ENCODE measurements at regions of chr19 and their contacts with region 1.

Region 1: DNA sequence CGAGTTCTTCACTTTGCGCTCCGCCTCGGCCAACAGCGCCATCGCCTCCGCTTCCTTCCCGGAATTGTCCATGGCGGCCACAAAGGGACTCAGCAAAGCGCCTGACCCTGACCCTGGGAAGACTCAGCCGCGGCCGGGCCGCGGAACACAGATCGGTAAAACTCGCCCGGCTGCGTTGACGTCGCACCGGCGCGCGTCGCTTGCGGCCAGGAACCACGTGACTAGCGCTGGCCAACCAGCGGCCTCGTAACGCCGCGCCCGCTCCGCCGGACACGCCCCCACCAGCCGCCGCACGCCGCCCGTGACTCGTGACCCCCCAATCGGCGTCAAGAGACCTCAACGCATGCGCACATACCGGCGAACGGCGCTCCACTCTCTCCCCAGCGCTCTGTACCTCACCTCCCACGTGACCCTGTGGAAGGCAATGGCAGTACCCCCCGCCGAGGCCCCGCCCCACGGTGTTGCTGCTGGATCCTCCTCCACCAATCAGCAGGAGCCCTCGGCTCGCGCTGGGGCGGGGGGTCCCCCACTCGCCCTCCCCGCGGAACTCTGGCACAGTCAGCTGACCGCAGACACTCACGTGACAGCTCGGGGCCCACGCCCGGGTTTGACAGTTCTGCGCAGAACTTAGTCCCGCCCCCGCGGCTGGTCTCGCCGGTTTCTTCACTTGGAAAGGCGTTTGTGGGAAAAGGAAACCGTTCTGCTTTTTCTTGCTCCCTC is at the start of gene NAPA:
- DNase-seq: peak; percentile 100
- ATAC-seq: peak; percentile 84 to 91
- H3K4me3 ChIP-seq: peak within 1 kb of the TSS; percentile 83 to 98 (median 95)
- H3K27ac ChIP-seq: peak within 1 kb of the TSS; percentile 96 to 100 (median 99)
- H3K4me1 ChIP-seq: peaks cover 43 to 48% of the 10 kb centered on the region in 2 donors
- H3K27me3 ChIP-seq: no peaks in the 10 kb centered on the region
- CTCF ChIP-seq: no peak
- POLR2A ChIP-seq: peak; percentile 99 to 100
- total RNA-seq, gene NAPA: 127 to 272 (median 212) TPM

Region 2: GRCh38 chr19:47273313-47273977 is 241.6 kb before region 1 on chr19:
- in situ Hi-C with region 1: no loop called
- intact Hi-C with region 1: loop called (anchors 10 kb)
- DNase-seq: peak; percentile 77 to 81
- ATAC-seq: peak; percentile 45 to 55
- H3K4me3 ChIP-seq: peak overlapping the region; percentile 60 to 74 (median 70)
- H3K27ac ChIP-seq: peak overlapping the region; percentile 88 to 95 (median 92)
- H3K4me1 ChIP-seq: peaks cover 15 to 35% of the 10 kb centered on the region in 2 donors
- H3K27me3 ChIP-seq: no peaks in the 10 kb centered on the region
- CTCF ChIP-seq: no peak
- POLR2A ChIP-seq: peak; percentile 55 to 70

Region 3: DNA sequence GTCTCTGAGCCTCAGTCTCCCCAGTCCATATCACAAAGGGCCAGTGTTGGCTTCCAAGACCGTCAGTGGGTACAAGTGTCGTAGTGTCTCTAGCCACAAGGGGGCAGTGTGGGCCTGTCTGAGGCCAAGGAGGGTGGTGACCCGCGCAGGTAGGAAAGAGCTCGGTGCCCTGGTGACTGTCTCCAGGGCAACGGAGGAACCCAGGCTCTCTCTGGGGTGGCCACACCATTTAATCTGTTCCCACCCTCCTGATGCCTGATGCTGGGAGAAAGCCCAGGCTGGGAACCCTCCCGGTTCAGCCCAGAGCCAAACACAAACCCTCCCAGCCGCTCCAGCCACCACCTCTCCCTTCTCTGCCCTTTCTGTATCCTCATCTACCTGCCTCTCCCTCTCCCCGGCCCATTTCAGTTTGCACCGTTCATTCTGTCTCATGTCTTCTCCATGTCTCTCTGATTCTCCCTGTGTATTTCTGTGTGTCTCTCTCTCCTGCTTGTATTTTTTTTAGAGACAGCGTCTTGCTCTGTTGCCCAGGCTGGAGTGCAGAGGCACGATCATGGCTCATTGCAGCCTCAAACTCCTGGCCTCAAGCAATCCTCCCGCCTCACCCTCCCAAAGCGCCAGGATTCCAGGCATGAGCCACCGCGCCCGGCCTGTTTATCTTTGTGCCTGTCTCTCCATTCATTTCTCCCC is 78.2 kb before region 1 on chr19:
- in situ Hi-C with region 1: loop called (anchors 5 kb)
- intact Hi-C with region 1: loop called (anchors 1 kb)
- DNase-seq: peak; percentile 51 to 74
- ATAC-seq: peak; percentile 92 to 96
- H3K4me3 ChIP-seq: no peak overlapping the region
- H3K27ac ChIP-seq: no peak overlapping the region
- H3K4me1 ChIP-seq: no peaks in the 10 kb centered on the region
- H3K27me3 ChIP-seq: peaks cover 15 to 34% (median 26%) of the 10 kb centered on the region in 3 donors
- CTCF ChIP-seq: peak; percentile 85 to 96 (median 93)
- POLR2A ChIP-seq: no peak

Region 4: GRCh38 chr19:47600246-47601179 is 85.5 kb after region 1 on chr19:
- in situ Hi-C with region 1: loop called in 1 of 4 experiments (anchors 10 kb)
- intact Hi-C with region 1: loop called (anchors 1 kb)
- DNase-seq: peak; percentile 99 to 100
- ATAC-seq: peak; percentile 96 to 97
- H3K4me3 ChIP-seq: peak overlapping the region; percentile 62 to 68 (median 63)
- H3K27ac ChIP-seq: peak overlapping the region; percentile 89 to 94 (median 92)
- H3K4me1 ChIP-seq: peaks cover 22 to 24% of the 10 kb centered on the region in 2 donors
- H3K27me3 ChIP-seq: no peaks in the 10 kb centered on the region
- CTCF ChIP-seq: peak in 2 of 5 experiments; percentile 10 to 34
- POLR2A ChIP-seq: peak; percentile 90 to 97

Region 5: DNA sequence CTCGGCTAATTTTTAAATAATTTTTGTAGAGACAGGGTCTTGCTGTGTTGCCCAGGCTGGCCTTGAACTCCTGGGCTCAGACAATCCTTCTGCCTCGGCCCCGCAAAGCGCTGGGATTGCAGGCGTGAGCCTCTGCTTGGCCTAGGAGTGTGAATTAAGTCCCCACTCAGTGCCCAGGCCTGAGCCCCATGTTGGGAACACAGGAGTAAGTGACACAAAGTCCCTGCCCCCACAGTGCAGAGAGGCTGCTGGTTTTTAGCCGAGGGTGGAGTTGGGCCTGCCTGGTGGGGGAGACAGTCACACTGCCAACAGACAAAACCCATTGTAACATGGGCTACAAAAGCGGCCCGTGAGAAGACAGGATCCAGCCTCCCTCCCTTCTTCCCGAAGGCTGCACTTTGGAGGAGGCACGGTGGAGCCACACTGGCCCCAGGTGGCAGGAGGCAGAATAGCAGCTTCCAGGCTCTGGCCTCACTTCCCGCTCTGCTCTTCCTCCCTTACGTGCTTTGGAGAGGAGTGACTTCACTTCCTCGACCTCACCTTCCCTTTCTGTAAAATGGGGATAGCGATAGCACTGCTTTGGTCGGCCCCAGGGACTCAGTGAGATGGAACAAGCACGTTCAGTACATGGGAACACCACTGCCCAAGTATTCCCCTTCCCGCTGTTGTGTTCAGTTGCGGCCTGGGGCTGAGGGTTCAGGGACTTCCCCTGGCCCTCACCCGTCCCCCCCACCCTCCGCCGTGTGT is 183.0 kb after region 1 on chr19:
- in situ Hi-C with region 1: loop called in 2 of 4 experiments (anchors 10 kb)
- intact Hi-C with region 1: loop called (anchors 2 kb)
- DNase-seq: peak; percentile 64 to 80
- ATAC-seq: peak; percentile 74 to 91
- H3K4me3 ChIP-seq: no peak overlapping the region
- H3K27ac ChIP-seq: peak overlapping the region; percentile 78 to 85 (median 80)
- H3K4me1 ChIP-seq: peaks cover 4% of the 10 kb centered on the region in 2 donors
- H3K27me3 ChIP-seq: no peaks in the 10 kb centered on the region
- CTCF ChIP-seq: peak; percentile 96 to 98 (median 98)
- POLR2A ChIP-seq: no peak

Region 6: DNA sequence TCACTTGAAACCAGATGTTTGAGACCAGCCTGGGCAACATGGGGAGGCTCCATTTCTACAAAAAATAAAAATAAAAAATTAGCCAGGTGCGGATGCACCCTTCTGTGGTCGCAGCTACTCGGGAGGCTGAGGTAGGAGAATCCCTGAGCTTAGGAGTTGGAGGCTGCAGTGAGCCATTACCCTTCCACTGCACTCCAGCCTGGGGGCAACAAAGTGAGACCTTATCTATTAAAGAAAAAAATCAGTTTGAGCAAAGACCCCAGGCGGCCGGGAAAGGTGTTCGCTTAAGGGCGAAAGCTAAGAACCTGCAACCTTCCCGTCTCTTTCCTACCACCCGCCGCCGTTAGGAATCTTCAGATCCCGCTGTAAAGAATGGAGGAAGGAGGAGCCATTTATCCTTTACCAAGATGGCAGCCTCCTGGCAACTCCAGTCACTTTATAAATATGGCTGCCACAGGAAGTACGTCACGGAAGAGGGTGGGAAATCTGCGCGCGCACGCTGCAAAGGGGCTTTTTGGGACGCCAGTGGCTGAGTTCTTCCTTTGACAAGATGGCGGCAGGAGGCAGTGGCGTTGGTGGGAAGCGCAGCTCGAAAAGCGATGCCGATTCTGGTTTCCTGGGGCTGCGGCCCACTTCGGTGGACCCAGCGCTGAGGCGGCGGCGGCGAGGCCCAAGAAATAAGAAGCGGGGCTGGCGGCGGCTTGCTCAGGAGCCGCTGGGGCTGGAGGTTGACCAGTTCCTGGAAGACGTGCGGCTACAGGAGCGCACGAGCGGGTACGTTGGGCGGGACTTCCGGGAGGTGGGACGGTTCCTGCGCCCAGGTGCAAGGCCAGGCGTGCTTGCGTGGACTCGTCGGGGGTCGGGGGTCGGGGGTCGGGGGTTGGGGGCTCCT is 230.2 kb after region 1 on chr19 and contains the start of gene NOP53:
- in situ Hi-C with region 1: no loop called
- intact Hi-C with region 1: loop called (anchors 1 kb)
- DNase-seq: peak; percentile 95 to 97
- ATAC-seq: peak; percentile 94
- H3K4me3 ChIP-seq: peak within 1 kb of the TSS; percentile 77 to 99 (median 92)
- H3K27ac ChIP-seq: peak within 1 kb of the TSS; percentile 92 to 99 (median 98)
- H3K4me1 ChIP-seq: peaks cover 22 to 33% of the 10 kb centered on the region in 2 donors
- H3K27me3 ChIP-seq: no peaks in the 10 kb centered on the region
- CTCF ChIP-seq: peak in 1 of 5 experiments; percentile 21
- POLR2A ChIP-seq: peak; percentile 77 to 79
- total RNA-seq, gene NOP53: 141 to 262 (median 150) TPM